Mucosa of descending colon (tissue), 3 donors: ENCODE measurements at regions of chr11 and their contacts with region 1.

Region 1: DNA sequence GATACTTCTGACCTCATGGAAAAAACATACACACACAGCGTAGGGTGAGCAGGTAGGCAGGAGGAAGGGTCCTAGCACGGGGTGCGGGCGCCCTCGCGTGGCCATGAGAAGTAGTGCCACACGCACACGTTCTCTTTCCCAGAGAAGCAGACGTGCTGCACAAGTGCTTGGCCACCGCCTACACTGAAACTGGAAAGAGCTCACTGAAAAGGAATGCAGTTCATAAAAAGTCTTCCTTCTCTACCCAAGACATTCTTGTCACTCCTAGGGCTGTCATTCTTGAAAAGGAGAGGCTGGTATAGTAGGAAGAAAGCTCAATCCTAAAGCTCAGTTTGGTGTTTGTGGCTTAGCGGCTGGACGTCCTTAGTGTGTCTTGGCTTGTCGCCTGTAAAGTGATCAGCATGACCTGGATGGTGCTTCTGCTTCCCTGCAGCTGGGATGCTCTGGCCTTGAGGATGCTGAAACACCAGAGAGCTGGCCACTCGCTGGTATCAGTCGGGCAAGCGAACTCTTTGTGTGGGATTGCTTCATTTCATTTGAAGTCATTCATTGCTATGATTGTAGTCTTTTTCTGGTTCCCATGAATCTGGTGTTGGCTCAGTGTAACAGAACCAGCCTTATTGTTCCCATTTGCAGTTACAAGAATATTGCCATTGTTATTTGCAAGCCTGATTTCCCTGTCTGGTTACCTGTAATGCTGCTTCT is 303.8 kb downstream of the NTM start:
- DNase-seq: peak in 2 of 3 donors; percentile 58 to 66
- ATAC-seq: peak; percentile 84
- H3K4me3 ChIP-seq: no peak overlapping the region
- H3K4me1 ChIP-seq: no peaks in the 10 kb centered on the region
- CTCF ChIP-seq: peak; percentile 79

Region 2: GRCh38 chr11:130924770-130925169 is 749.4 kb before region 1 on chr11:
- intact Hi-C with region 1: loop called in 1 of 2 experiments (anchors 5 kb)
- DNase-seq: no peak
- ATAC-seq: no peak
- H3K4me3 ChIP-seq: no peak overlapping the region
- H3K4me1 ChIP-seq: no peaks in the 10 kb centered on the region
- CTCF ChIP-seq: no peak

Region 3: GRCh38 chr11:132278801-132279574 is 604.8 kb after region 1 on chr11:
- intact Hi-C with region 1: no loop called
- DNase-seq: peak in 1 of 3 donors; percentile 11
- ATAC-seq: no peak
- H3K4me3 ChIP-seq: no peak overlapping the region
- H3K4me1 ChIP-seq: no peaks in the 10 kb centered on the region
- CTCF ChIP-seq: no peak